ENCODE measurements at regions of chr2 and their contacts with region 1.

Region 1: GRCh38 chr2:121505005-121505404 is 25.7 kb upstream of the RNU4ATAC start:
- DNase-seq: peak; percentile 99
- H3K4me3 ChIP-seq: peak overlapping the region in 2 of 3 experiments; percentile 25 to 31
- H3K27ac ChIP-seq: peak overlapping the region; percentile 99
- H3K4me1 ChIP-seq: peaks cover 55% of the 10 kb centered on the region
- H3K27me3 ChIP-seq: no peaks in the 10 kb centered on the region
- CTCF ChIP-seq: no peak

Region 2: DNA sequence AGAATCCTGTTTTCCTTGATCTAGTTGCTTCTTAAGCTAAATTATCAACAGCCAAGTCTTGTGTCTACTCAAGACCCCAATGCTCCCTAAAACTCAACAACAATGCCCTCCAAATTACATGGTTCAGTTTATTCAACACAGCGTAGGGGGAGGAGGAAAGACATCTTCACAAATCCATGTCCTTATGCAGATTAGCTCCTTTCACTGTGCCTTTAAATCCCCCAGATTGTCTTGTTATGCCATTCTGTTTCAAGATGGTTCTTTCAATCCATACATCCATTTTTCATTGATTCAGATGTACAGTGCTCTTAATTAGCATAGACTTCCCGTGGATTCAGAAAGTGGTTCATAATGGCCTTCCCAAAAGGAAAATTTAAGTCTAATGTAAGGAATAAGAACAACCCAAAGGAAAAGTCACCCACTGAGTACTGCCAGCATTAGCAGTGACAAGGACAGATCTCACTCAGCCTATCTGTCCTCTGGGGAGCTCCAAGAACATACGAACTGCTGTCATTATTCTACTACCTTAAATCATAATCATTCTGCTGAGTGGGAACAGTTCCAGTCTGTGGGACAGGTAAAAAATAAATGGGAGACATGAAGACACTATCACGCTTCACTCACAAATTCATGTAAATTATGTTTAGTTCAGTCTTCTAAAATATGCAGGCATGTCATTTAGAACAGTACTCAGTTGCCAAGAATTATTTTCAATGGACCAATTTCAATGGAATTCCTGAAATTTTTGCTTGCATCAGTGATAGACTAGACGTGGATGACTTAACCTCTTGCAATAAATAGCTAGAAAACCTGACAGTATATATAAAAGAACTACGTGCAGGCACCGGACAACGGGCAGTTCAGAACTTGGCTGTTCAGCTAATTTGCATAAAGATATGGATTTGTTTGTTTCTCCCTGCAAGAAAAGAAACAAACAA is 33.2 kb before region 1 on chr2:
- CTCF ChIA-PET with region 1: no interaction called
- dilution Hi-C with region 1: no loop called
- in situ Hi-C with region 1: no loop called
- intact Hi-C with region 1: loop called (anchors 1 kb)
- DNase-seq: no peak
- H3K4me3 ChIP-seq: no peak overlapping the region
- H3K27ac ChIP-seq: no peak overlapping the region
- H3K4me1 ChIP-seq: peaks cover 17% of the 10 kb centered on the region
- H3K27me3 ChIP-seq: no peaks in the 10 kb centered on the region
- CTCF ChIP-seq: no peak

Region 3: GRCh38 chr2:121489284-121489683 is 15.7 kb before region 1 on chr2:
- CTCF ChIA-PET with region 1: no interaction called
- dilution Hi-C with region 1: no loop called
- in situ Hi-C with region 1: no loop called
- intact Hi-C with region 1: loop called (anchors 1 kb)
- DNase-seq: peak; percentile 72
- H3K4me3 ChIP-seq: peak overlapping the region in 1 of 3 experiments; percentile 38
- H3K27ac ChIP-seq: peak overlapping the region; percentile 18
- H3K4me1 ChIP-seq: peaks cover 61% of the 10 kb centered on the region
- H3K27me3 ChIP-seq: no peaks in the 10 kb centered on the region
- CTCF ChIP-seq: no peak

Region 4: GRCh38 chr2:121722479-121722878 is 217.5 kb after region 1 on chr2:
- CTCF ChIA-PET with region 1: no interaction called
- dilution Hi-C with region 1: no loop called
- in situ Hi-C with region 1: no loop called
- intact Hi-C with region 1: no loop called
- DNase-seq: peak; percentile 82
- H3K4me3 ChIP-seq: no peak overlapping the region
- H3K27ac ChIP-seq: peak overlapping the region; percentile 80
- H3K4me1 ChIP-seq: peaks cover 12% of the 10 kb centered on the region
- H3K27me3 ChIP-seq: no peaks in the 10 kb centered on the region
- CTCF ChIP-seq: no peak

Measured in mammary epithelial cell (primary cell).